SK-N-SH (cell line): ENCODE measurements at regions of chr9 and their contacts with region 1.

Region 1: DNA sequence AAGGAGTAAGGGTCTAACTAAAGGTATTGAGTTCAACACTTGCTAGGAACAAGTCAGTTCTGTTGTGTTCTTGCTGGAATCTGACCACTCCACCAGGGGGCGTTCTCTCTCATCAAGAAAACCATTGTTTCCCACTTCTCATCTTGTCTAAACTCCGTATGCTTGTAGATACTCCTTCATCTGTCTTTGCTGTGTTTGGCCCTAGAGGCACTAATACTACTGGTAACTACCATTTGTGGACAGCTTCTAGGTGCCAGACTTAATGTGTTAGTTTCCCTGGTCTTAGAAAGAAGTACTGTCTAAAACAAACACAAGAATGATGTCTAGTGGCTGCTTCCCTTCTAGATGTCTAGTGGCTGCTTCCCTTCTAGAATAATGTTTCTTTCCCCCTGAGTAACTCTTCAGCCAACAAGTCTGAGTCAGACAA is 18.7 kb upstream of the PTPDC1 start:
- DNase-seq: peak; percentile 46
- H3K4me3 ChIP-seq: no peak overlapping the region; a peak in 1 of 4 replicates
- H3K27ac ChIP-seq: no peak overlapping the region
- H3K4me1 ChIP-seq: no peaks in the 10 kb centered on the region
- H3K27me3 ChIP-seq: no peaks in the 10 kb centered on the region
- CTCF ChIP-seq: peak; percentile 89
- EP300 ChIP-seq: no peak
- RAD21 ChIP-seq: peak; percentile 86

Region 2: GRCh38 chr9:94014065-94014654 is 51.4 kb before region 1 on chr9:
- CTCF ChIA-PET with region 1: interaction called, 10 read pairs
- POLR2A ChIA-PET with region 1: no interaction called
- DNase-seq: peak; percentile 46
- H3K4me3 ChIP-seq: no peak overlapping the region
- H3K27ac ChIP-seq: no peak overlapping the region
- H3K4me1 ChIP-seq: no peaks in the 10 kb centered on the region; a peak in 1 of 4 replicates
- H3K27me3 ChIP-seq: no peaks in the 10 kb centered on the region
- CTCF ChIP-seq: peak; percentile 67
- EP300 ChIP-seq: no peak
- RAD21 ChIP-seq: peak; percentile 61

Region 3: DNA sequence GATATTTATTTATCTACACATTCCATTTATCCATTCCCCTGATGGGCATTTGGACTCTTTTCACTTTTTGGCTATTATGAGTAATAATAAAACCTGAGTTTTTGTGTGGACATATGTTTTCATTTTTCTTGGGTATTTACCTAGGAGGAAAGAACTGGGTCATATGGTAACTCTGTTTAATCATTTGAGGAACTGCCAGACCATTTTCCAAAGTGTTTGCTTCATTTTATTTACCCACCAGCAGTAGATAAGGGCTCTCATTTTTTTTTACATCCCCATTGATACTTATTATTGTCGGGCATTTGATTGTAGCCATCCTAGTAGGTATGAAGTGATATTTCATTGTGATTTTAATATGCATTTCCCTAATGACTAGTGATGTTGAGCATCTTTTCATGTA is 11.0 kb after region 1 on chr9:
- CTCF ChIA-PET with region 1: interaction called, 20 read pairs
- POLR2A ChIA-PET with region 1: no interaction called
- DNase-seq: no peak
- H3K4me3 ChIP-seq: no peak overlapping the region
- H3K27ac ChIP-seq: no peak overlapping the region
- H3K4me1 ChIP-seq: no peaks in the 10 kb centered on the region
- H3K27me3 ChIP-seq: no peaks in the 10 kb centered on the region
- CTCF ChIP-seq: no peak
- EP300 ChIP-seq: no peak
- RAD21 ChIP-seq: no peak

Region 4: DNA sequence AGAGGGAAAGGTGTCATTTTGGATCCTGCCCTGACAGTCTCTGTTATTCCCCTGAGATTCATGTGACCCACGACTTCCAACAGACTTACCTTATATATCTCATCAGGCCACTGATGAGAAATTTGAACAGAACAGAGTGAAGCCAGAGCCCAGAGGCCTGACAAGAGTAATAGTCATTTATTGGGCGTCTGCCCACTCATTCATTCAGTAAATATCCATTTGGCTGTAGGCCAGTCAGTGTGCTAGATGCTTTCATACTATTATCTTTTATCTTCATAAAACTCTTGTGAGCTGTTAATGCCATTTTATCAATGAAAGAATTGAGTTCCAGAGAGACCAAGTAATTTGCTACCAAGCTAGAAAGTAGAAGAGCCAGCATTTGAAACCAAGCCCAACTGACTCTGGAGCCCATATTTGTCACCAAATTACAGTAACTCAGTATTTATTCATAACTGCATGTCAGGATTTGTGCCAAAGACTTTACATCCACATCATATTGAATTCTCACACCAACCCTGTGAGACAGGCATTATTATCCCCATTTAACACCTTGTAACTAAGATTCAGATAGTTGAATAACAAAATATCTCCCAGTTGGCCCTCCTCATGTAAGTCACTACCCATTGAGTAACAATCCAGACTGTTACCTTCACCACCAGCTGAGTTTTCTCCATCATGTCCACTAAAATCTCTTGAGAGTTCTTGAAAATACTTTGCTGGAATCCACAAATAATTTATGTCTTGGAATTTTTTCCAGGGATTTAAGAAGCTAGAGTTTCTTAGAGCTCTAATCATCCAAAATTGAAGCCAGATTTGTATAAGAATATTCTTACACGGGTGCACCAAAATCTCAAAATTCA is 21.2 kb after region 1 on chr9:
- CTCF ChIA-PET with region 1: interaction called, 13 read pairs
- POLR2A ChIA-PET with region 1: no interaction called
- DNase-seq: peak; percentile 59
- H3K4me3 ChIP-seq: no peak overlapping the region
- H3K27ac ChIP-seq: peak overlapping the region; percentile 71 to 75
- H3K4me1 ChIP-seq: peaks cover 19 to 21% of the 10 kb centered on the region in 2 experiments; a peak in 3 of 4 replicates
- H3K27me3 ChIP-seq: no peaks in the 10 kb centered on the region
- CTCF ChIP-seq: no peak
- EP300 ChIP-seq: peak; percentile 68 to 69; a peak in 3 of 4 replicates
- RAD21 ChIP-seq: peak; percentile 13; the same call in 1 of the 2 replicates